ENCODE measurements at regions of chr19 and their contacts with region 1.

Region 1: GRCh38 chr19:11987405-11988281 is 22.8 kb downstream of the ZNF763 start:
- DNase-seq: peak; percentile 98
- ATAC-seq: peak; percentile 98
- H3K4me3 Mint-ChIP-seq: peak overlapping the region; percentile 86
- H3K27ac Mint-ChIP-seq: peak overlapping the region; percentile 92
- H3K4me1 Mint-ChIP-seq: peaks cover 18% of the 10 kb centered on the region
- H3K27me3 Mint-ChIP-seq: no peaks in the 10 kb centered on the region

Region 2: DNA sequence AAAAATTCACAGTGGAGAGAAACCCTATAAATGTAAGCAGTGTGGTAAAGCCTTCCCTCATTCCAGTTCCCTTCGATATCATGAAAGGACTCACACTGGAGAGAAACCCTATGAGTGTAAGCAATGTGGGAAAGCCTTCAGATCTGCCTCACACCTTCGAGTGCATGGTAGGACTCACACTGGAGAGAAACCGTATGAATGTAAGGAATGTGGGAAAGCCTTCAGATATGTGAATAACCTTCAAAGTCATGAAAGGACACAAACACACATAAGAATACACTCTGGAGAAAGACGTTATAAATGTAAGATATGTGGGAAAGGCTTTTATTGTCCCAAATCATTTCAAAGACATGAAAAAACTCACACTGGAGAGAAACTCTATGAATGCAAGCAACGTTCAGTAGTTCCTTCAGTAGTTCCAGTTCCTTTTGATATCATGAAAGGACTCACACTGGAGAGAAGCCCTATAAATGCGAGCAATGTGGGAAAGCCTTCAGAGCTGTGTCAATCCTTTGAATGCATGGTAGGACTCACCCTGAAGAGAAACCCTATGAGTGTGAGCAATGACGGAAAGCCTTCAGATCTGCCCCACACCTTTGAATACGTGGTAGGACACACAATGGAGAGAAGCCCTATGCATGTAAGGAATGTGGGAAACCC is 155.3 kb before region 1 on chr19:
- CTCF ChIA-PET with region 1: no interaction called
- POLR2A ChIA-PET with region 1: no interaction called
- intact Hi-C with region 1: no loop called
- DNase-seq: no peak
- ATAC-seq: no peak
- H3K4me3 Mint-ChIP-seq: no peak overlapping the region
- H3K27ac Mint-ChIP-seq: no peak overlapping the region
- H3K4me1 Mint-ChIP-seq: no peaks in the 10 kb centered on the region
- H3K27me3 Mint-ChIP-seq: no peaks in the 10 kb centered on the region

Region 3: DNA sequence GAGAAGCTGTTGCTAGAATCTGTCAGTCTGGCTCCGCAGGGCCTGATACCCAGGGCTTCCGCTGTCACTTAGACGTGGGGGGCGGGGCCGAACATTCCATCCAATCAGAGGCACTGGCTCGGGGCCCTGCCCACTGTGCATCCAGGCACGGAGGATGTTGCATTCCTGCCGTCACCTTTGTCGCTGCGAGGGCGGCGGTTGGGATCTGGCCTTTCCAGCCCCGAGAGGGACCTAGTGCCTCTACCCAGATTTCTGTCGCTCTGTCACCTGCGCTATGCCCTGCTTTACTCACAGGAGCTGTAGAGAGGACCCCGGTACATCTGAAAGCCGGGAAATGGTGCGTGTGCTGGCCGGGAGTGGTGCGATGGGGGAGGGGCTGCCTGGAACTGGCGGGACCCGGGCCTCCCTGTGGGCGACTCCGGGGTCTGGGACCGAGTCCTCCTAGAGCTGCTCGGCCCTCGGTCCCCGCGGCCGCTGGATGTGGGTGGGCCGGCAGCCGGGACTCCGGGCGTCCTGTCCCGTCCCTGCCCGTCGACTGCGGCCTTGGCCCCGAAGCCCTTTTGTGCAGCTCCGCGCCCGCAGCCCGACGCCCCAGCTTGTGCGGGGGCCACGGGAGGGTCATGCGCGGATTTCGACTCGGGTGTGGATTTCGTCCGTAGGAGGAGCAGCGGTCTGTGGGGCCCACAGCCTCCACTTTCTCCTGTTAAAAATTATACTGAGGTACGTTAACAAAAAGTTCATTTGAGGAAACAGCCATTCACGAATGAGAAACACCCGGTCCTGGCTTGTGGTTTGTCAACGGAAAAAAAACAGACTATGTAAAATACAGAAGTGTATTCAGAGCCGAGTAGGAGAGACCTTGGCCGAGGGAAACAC is 138.8 kb before region 1 on chr19 and contains the start of gene ZNF439:
- CTCF ChIA-PET with region 1: interaction called, 4 read pairs
- POLR2A ChIA-PET with region 1: no interaction called
- intact Hi-C with region 1: loop called in 1 of 2 experiments (anchors 1 kb)
- DNase-seq: peak; percentile 96
- ATAC-seq: peak; percentile 100
- H3K4me3 Mint-ChIP-seq: peak within 1 kb of the TSS; percentile 80
- H3K27ac Mint-ChIP-seq: peak within 1 kb of the TSS; percentile 85
- H3K4me1 Mint-ChIP-seq: peaks cover 23% of the 10 kb centered on the region
- H3K27me3 Mint-ChIP-seq: no peaks in the 10 kb centered on the region
- total RNA-seq, gene ZNF439: 10.4 to 11.4 TPM

Region 4: GRCh38 chr19:11881151-11881800 is 106.4 kb before region 1 on chr19:
- CTCF ChIA-PET with region 1: interaction called, 5 read pairs
- POLR2A ChIA-PET with region 1: no interaction called
- intact Hi-C with region 1: loop called (anchors 1 to 2 kb)
- DNase-seq: peak; percentile 75
- ATAC-seq: peak; percentile 77
- H3K4me3 Mint-ChIP-seq: no peak overlapping the region
- H3K27ac Mint-ChIP-seq: no peak overlapping the region
- H3K4me1 Mint-ChIP-seq: no peaks in the 10 kb centered on the region
- H3K27me3 Mint-ChIP-seq: no peaks in the 10 kb centered on the region

Region 5: GRCh38 chr19:11931051-11931450 is 56.6 kb before region 1 on chr19:
- CTCF ChIA-PET with region 1: no interaction called
- POLR2A ChIA-PET with region 1: no interaction called
- intact Hi-C with region 1: no loop called
- DNase-seq: no peak
- ATAC-seq: no peak
- H3K4me3 Mint-ChIP-seq: no peak overlapping the region
- H3K27ac Mint-ChIP-seq: no peak overlapping the region
- H3K4me1 Mint-ChIP-seq: peaks cover 28% of the 10 kb centered on the region
- H3K27me3 Mint-ChIP-seq: no peaks in the 10 kb centered on the region

Region 6: DNA sequence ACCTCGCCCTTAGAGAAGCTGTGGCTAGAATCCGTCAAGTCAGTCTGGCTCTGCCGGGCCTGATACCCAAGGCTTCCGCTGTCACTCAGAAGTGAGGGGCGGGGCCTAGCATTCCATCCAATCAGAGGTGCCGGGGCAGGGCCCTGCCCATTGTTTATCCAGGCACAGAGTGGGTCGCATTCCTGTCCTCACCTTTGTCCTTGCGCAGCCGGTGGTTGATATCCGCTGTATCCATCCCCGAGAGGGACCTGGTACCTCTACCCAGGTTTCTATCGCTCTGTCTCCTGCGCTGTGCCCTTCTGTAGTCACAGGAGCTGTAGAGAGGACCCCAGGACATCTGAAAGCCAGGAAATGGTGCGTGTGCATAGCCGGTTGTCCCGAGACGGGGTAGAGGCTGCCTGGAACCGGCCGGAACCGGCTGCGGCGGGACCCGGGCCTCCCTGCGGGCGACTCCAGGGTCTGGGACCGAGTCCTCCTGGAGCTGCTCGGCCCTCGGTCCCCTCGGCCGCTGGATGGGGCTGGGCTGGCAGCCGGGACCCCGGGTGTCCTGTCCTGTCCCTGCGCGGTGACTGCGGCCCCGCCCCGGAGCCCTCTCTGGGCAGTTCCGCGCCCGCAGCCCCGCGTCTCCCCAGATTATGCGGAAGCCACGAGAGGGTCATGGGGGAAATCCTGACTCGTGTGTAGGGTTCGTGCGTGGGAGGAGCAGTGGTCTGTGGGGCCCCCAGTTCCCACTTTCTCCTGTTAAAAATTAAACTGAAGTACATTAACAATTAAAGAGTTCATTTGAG is 22.6 kb before region 1 on chr19 and contains the start of gene ZNF763:
- CTCF ChIA-PET with region 1: interaction called, 40 read pairs
- POLR2A ChIA-PET with region 1: interaction called, 3 read pairs
- intact Hi-C with region 1: loop called (anchors 1 kb)
- DNase-seq: peak; percentile 94
- ATAC-seq: peak; percentile 98
- H3K4me3 Mint-ChIP-seq: peak within 1 kb of the TSS; percentile 84
- H3K27ac Mint-ChIP-seq: peak within 1 kb of the TSS; percentile 73
- H3K4me1 Mint-ChIP-seq: peaks cover 20% of the 10 kb centered on the region
- H3K27me3 Mint-ChIP-seq: no peaks in the 10 kb centered on the region
- total RNA-seq, gene ZNF763: 1.1 to 1.2 TPM

Region 7: DNA sequence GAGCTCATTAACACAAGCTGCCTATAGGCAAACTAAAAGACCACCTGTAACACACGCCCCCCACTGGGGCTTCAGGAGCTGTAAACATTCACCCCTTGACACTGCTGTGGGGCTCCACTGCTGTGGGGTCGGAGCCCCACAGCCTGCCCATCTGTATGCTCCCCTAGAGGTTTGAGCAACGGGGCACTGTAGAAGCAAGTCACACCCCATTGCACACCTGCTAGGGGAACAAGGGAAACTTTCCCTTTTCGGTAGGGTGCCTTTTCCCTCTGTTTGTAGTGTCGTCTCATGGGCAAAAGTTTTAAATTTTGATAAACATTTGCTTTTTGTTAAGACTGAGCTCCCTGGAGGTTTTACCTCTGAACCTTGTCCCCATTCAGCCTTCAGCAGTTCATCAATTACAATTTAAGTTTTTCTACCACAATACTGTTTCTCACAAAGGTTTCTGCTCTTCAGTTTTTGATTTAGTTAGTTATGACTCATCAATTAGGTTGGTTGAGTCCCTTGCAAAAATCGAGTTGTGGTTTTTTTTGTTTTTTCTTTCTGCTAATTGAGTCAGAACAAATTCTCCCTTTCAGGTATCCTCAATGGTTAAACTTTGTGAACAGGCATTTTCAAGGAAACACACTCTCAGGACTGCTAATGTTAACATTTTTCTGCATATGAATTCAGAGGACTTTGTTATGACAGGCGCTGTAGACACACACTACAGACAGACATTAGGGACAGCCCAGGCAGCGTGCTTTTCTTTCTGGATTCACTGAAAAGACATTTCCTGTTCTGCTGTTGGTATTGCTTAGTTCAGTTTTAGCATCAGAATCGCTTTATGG is 12.7 kb after region 1 on chr19:
- CTCF ChIA-PET with region 1: interaction called, 11 read pairs
- POLR2A ChIA-PET with region 1: no interaction called
- intact Hi-C with region 1: loop called (anchors 1 kb)
- DNase-seq: peak; percentile 57
- ATAC-seq: peak; percentile 96
- H3K4me3 Mint-ChIP-seq: no peak overlapping the region
- H3K27ac Mint-ChIP-seq: peak overlapping the region; percentile 81
- H3K4me1 Mint-ChIP-seq: peaks cover 23% of the 10 kb centered on the region
- H3K27me3 Mint-ChIP-seq: no peaks in the 10 kb centered on the region

Region 8: GRCh38 chr19:12052497-12053169 is 65.0 kb after region 1 on chr19 and contains the start of gene ZNF878:
- CTCF ChIA-PET with region 1: no interaction called
- POLR2A ChIA-PET with region 1: no interaction called
- intact Hi-C with region 1: loop called in 1 of 2 experiments (anchors 5 kb)
- DNase-seq: peak; percentile 82
- ATAC-seq: peak; percentile 95
- H3K4me3 Mint-ChIP-seq: peak within 1 kb of the TSS; percentile 66
- H3K27ac Mint-ChIP-seq: peak within 1 kb of the TSS; percentile 2
- H3K4me1 Mint-ChIP-seq: peaks cover 9% of the 10 kb centered on the region
- H3K27me3 Mint-ChIP-seq: peaks cover 14% of the 10 kb centered on the region
- total RNA-seq, gene ZNF878: 1.1 TPM

Region 9: DNA sequence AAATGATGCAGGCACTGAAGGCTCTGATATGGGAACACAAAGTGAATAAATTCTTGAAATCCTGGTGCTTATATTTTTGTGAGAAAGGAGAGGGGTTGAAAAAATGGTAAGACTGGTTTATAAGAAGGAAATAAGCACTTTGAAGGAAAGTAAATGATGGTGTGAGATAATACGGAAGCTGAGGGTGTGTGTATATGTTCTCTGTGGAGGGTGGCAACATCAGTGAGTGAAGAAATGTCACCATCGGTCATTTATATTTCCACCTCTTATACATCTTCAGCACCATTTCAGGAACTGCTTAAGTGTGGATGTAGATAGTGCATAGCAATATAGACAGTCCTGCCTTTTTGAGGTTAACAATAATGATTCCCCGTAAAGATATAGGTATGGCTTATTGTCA is 192.7 kb after region 1 on chr19:
- CTCF ChIA-PET with region 1: no interaction called
- POLR2A ChIA-PET with region 1: no interaction called
- intact Hi-C with region 1: no loop called
- DNase-seq: no peak
- ATAC-seq: no peak
- H3K4me3 Mint-ChIP-seq: no peak overlapping the region
- H3K27ac Mint-ChIP-seq: no peak overlapping the region
- H3K4me1 Mint-ChIP-seq: peaks cover 13% of the 10 kb centered on the region
- H3K27me3 Mint-ChIP-seq: no peaks in the 10 kb centered on the region

Region 10: DNA sequence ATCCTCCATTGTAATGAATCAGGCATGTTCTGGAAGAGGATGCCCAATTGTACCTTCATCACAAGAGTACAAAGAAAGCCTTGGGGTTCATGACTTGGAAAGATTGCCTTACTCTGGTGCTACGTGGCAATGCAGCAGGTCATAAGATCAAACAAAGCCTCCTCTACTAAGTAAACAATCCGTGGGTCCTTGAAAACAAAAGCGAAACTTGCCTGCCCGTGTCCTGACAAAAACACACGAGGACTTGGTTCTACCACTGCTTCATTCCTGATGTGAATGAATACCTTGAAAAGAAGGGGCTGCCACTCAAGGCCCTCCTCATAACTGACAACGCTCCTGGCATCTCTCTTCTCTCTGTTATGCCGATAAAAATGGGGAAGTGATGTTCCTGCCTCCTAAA is 326.9 kb after region 1 on chr19:
- CTCF ChIA-PET with region 1: no interaction called
- POLR2A ChIA-PET with region 1: no interaction called
- intact Hi-C with region 1: no loop called
- DNase-seq: no peak
- ATAC-seq: no peak
- H3K4me3 Mint-ChIP-seq: no peak overlapping the region
- H3K27ac Mint-ChIP-seq: no peak overlapping the region
- H3K4me1 Mint-ChIP-seq: peaks cover 3% of the 10 kb centered on the region
- H3K27me3 Mint-ChIP-seq: no peaks in the 10 kb centered on the region

Measured in activated CD4-positive, alpha-beta T cell treated with anti-CD3 and anti-CD28 coated beads for 36 hours (primary cell).